Activated CD4-positive, alpha-beta memory T cell treated with anti-CD3 and anti-CD28 coated beads for 36 hours (primary cell): ENCODE measurements at regions of chrX and their contacts with region 1.

Region 1: DNA sequence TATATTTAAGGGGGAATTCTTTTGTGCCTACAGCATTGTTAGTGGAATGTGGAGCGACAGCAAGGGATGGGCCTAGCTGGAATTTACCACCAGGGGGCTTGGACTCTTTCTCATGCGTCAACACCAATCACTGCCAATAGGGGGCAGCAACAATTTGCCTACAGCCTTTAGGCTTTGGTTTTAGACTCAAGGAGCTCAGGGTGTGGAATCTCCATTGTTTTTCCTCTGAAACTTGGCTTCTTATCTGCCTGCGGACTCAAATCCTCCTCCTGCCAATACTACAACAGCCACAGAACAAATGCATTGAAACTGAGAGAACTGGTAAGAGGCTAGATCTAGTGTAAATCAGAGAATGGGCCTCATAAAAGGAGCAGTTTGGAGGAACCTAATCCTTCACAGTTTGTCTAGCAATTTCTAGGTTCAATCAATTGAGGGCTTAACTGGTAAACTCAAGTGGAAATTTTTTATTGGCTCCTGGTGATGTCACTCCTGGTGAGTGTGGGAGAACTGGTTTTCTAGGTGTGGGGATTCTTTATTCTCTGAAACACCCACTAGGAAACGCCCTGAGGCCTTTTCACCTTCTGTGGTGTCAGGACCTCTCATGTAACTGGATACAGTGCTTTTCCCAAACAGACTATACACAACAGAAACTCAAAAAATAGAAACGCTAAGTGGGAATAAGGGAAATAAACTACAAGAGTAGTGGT is 27.9 kb upstream of the TMSB4X start:
- DNase-seq: peak; percentile 80
- H3K4me3 Mint-ChIP-seq: peak overlapping the region; percentile 57
- H3K27ac Mint-ChIP-seq: peak overlapping the region; percentile 96
- H3K4me1 Mint-ChIP-seq: peaks cover 55% of the 10 kb centered on the region
- H3K27me3 Mint-ChIP-seq: no peaks in the 10 kb centered on the region

Region 2: GRCh38 chrX:12580548-12580947 is 366.4 kb before region 1 on chrX:
- CTCF ChIA-PET with region 1: no interaction called
- POLR2A ChIA-PET with region 1: no interaction called
- intact Hi-C with region 1: no loop called
- DNase-seq: no peak
- H3K4me3 Mint-ChIP-seq: no peak overlapping the region
- H3K27ac Mint-ChIP-seq: no peak overlapping the region
- H3K4me1 Mint-ChIP-seq: no peaks in the 10 kb centered on the region
- H3K27me3 Mint-ChIP-seq: no peaks in the 10 kb centered on the region

Region 3: GRCh38 chrX:12974796-12975669 is 28.0 kb after region 1 on chrX and contains the start of gene TMSB4X:
- CTCF ChIA-PET with region 1: interaction called, 25 read pairs
- POLR2A ChIA-PET with region 1: interaction called, 426 read pairs
- intact Hi-C with region 1: loop called (anchors 1 kb)
- DNase-seq: peak; percentile 89
- H3K4me3 Mint-ChIP-seq: peak within 1 kb of the TSS; percentile 94
- H3K27ac Mint-ChIP-seq: peak within 1 kb of the TSS; percentile 99
- H3K4me1 Mint-ChIP-seq: peaks cover 22% of the 10 kb centered on the region
- H3K27me3 Mint-ChIP-seq: peaks cover 3% of the 10 kb centered on the region
- total RNA-seq, gene TMSB4X: 6,087 to 6,256 TPM

Region 4: DNA sequence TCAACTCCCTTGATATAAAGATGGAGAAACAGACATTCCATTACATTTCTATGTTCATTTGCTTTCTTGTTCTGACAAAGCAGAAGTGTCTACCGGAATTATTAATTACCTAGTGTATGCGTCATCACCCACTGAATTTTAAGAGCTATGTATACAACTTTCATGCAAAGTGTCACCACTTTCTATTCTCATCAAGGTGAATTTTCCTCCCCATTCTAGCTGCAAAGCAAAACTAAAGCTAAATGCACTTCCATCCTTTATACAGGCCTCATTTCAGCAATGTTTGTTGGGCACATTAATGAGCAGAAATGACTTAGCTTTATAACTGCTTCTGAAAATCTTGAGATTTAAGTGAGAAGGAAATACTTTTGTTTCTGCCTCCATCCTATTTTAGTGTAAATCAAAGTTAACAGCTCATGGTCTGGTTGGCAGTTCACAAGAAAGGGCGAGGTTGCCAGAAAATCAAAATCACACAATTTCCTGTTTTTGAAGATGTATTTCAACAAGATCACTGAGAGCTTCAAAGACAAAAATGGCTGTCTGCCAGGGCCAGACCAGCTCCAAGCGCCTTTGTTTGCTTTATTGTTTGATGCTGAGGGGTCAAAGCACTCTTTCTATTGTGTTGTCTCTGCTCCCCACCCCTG is 104.7 kb after region 1 on chrX:
- CTCF ChIA-PET with region 1: interaction called, 12 read pairs
- POLR2A ChIA-PET with region 1: interaction called, 4 read pairs
- intact Hi-C with region 1: loop called (anchors 1 kb)
- DNase-seq: peak; percentile 20
- H3K4me3 Mint-ChIP-seq: peak overlapping the region; percentile 4
- H3K27ac Mint-ChIP-seq: peak overlapping the region; percentile 95
- H3K4me1 Mint-ChIP-seq: peaks cover 72% of the 10 kb centered on the region
- H3K27me3 Mint-ChIP-seq: no peaks in the 10 kb centered on the region

Region 5: DNA sequence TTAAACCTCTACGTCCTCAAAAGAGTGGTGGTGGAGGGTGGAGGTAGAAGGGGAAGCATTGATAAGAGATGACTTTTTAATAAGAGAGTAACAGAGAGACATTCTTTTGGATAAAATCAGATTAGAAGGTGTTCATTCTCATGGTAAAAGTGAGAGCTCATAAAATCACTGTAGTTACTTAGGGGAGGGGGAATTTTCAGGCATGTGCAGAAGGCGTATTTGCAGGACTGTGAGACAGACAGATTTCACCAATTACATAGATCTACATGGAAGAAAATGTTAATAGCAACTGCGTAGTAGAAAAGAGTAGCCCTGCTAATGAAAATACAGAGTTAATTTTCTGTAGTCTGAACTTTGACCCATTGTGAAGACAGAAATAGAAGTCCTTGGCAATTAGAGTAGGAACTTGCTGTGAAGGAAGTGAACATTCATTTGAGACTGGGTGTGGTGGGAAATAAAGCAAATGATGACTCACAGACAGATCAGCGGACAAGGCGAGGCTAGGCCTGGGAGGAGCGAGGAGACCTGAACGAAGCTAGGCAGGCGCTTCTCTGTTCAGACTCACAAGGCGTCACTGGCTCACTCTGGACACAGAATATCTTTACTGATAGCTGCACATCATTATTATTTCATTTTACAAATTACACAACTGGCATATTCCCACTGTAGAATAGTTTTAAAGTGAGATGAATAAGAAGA is 154.6 kb after region 1 on chrX:
- CTCF ChIA-PET with region 1: interaction called, 81 read pairs
- POLR2A ChIA-PET with region 1: no interaction called
- intact Hi-C with region 1: no loop called
- DNase-seq: peak; percentile 67
- H3K4me3 Mint-ChIP-seq: no peak overlapping the region
- H3K27ac Mint-ChIP-seq: peak overlapping the region; percentile 52
- H3K4me1 Mint-ChIP-seq: peaks cover 57% of the 10 kb centered on the region
- H3K27me3 Mint-ChIP-seq: no peaks in the 10 kb centered on the region

Region 6: GRCh38 chrX:13120017-13120416 is 173.0 kb after region 1 on chrX:
- CTCF ChIA-PET with region 1: no interaction called
- POLR2A ChIA-PET with region 1: no interaction called
- intact Hi-C with region 1: no loop called
- DNase-seq: no peak
- H3K4me3 Mint-ChIP-seq: no peak overlapping the region
- H3K27ac Mint-ChIP-seq: no peak overlapping the region
- H3K4me1 Mint-ChIP-seq: peaks cover 24% of the 10 kb centered on the region
- H3K27me3 Mint-ChIP-seq: no peaks in the 10 kb centered on the region

Region 7: GRCh38 chrX:13266641-13267345 is 319.8 kb after region 1 on chrX:
- CTCF ChIA-PET with region 1: interaction called, 7 read pairs
- POLR2A ChIA-PET with region 1: no interaction called
- intact Hi-C with region 1: loop called (anchors 5 kb)
- DNase-seq: peak; percentile 41
- H3K4me3 Mint-ChIP-seq: no peak overlapping the region
- H3K27ac Mint-ChIP-seq: no peak overlapping the region
- H3K4me1 Mint-ChIP-seq: peaks cover 8% of the 10 kb centered on the region
- H3K27me3 Mint-ChIP-seq: no peaks in the 10 kb centered on the region

Region 8: GRCh38 chrX:13506574-13506973 is 559.6 kb after region 1 on chrX:
- CTCF ChIA-PET with region 1: interaction called, 11 read pairs
- POLR2A ChIA-PET with region 1: no interaction called
- intact Hi-C with region 1: loop called (anchors 5 kb)
- DNase-seq: peak; percentile 57
- H3K4me3 Mint-ChIP-seq: no peak overlapping the region
- H3K27ac Mint-ChIP-seq: no peak overlapping the region
- H3K4me1 Mint-ChIP-seq: peaks cover 5% of the 10 kb centered on the region
- H3K27me3 Mint-ChIP-seq: no peaks in the 10 kb centered on the region